SK-N-SH (cell line): ENCODE measurements at regions of chr2 and their contacts with region 1.

Region 1: DNA sequence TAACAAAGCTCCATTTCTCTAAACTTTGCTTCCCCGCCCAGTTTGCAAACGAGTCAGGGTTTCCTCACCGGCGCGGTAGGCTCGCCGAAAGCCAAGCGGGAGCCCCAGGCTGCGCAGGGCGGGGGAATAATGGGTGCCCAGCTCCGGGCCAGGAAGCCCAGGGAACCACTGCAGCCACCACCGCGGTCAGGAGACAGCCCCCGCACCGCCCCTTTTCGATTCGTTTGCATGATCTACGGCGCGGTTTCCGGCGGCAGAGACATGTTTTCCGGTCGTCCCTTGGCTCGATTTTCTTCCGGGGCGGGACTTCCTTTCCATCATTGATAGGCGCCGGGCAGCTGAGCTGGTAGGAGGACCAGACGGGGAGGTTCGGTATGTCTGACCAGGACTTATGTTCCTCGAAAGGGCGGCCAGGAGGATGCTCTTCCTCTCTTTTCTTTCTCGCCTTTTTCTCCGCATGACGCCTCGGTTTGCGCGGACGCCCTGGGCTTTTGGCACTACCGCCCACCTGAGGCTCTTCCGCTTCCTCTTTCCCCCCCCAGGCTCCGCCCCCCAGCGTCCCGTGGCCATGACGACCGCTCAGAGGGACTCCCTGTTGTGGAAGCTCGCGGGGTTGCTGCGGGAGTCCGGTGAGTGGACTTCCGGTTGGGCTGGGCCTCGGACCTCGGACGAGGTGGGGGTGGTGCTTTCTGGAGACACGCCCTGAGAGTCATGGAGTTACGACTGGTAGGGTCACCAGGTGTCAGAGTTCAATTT is at the start of gene STK11IP:
- DNase-seq: peak; percentile 98
- H3K4me3 ChIP-seq: peak within 1 kb of the TSS; percentile 71 to 73
- H3K27ac ChIP-seq: peak within 1 kb of the TSS; percentile 80 to 95
- H3K4me1 ChIP-seq: peaks cover 0 to 4% of the 10 kb centered on the region in 2 experiments; a peak in 2 of 4 replicates
- H3K27me3 ChIP-seq: no peaks in the 10 kb centered on the region
- CTCF ChIP-seq: no peak
- EP300 ChIP-seq: no peak
- RAD21 ChIP-seq: no peak
- polyA plus RNA-seq, gene STK11IP: 22.1 and 22.9 TPM in 2 replicates

Region 2: DNA sequence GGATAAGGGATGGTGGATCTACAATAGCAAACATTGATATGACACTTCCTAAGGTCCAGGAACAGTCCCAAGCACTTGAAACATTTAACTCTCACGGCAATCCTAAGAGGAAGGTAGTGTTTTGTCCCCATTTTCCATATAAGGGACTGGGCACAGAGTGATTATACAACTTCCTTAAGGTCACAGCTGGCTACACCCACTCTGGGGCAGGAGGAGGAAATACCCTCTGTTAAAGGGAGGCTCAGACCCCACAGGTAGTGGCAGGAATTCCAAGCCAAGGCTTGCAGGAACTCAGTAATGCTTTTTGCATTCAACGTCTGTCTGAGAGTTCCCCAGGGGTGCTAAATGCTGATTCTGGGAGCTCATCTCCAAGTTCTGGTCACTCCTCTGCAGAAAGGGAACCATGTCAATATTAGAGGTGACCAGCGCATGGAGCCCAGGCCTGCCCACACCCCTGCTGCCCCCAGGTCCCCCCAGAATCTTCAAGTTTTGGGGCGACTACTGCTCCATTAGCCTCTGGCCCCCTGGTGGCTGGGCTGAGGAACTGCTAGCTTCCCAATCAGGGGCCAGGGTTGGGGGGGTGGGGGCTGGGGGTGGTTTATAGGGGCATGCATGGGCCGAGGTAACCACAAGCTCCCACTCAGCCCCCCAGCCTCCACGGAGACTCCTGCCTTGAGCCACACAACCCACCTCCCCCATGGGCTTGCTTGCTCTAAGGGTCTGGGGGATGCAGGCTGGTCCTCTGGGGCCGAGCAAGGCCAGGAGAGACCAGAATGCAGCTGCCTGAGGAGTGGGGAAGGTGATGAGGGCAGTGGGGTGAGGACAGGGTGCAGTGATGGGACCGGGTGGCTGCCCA is 37.5 kb before region 1 on chr2:
- CTCF ChIA-PET with region 1: interaction called, 25 read pairs
- POLR2A ChIA-PET with region 1: interaction called, 9 read pairs
- DNase-seq: peak; percentile 90
- H3K4me3 ChIP-seq: no peak overlapping the region
- H3K27ac ChIP-seq: no peak overlapping the region
- H3K4me1 ChIP-seq: peaks cover 0 to 10% of the 10 kb centered on the region in 2 experiments; a peak in 1 of 4 replicates
- H3K27me3 ChIP-seq: no peaks in the 10 kb centered on the region
- CTCF ChIP-seq: peak; percentile 70
- EP300 ChIP-seq: no peak
- RAD21 ChIP-seq: no peak

Region 3: DNA sequence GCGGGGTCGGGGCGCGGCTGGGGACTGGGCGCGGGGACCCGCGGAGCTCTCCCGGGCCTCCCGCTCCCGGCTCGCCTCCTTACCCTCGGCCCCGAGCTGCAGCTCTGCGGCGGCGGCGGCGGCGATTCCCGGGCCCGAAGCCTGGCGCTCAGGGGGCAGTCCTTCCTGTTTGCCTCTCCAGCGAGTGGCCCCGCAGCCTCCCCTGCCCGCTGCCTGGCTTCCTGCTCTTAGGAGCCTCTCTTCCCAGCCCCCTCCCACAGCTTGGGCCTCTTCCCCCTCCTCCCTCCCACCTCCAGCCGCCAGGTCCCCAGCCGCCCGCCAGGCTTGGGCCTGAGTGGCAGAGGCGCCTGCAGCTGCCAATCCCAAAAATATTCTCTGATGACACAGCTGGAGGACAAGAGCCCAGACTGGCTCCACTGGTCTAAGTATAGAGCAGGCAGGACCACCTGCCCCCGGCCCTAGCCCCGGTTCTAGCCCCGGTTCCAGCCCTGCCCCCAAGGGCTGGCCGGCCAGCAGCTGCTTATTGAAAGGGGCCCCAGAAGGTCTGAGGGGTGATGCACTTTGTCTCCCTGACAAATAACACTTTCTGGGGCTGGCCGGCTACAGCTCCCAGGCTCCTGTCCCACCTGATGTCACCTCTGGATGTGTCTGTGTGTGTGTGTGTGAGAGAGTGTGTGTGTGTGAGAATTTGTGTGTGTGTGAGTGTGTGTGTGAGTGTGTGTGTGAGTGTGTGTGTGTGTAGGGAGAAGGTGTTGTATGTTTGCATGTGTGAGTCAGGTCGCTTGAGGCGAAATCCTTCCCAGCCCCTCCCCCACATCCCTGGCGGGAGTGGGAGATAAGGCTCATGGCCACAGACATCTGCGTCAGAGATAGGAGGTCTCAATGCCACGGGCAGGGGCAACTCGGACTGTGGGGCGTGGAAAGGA is 26.2 kb before region 1 on chr2 and contains the start of gene OBSL1:
- CTCF ChIA-PET with region 1: interaction called, 13 read pairs
- POLR2A ChIA-PET with region 1: interaction called, 56 read pairs
- DNase-seq: peak; percentile 97
- H3K4me3 ChIP-seq: peak within 1 kb of the TSS; percentile 65 to 82
- H3K27ac ChIP-seq: peak within 1 kb of the TSS; percentile 36 to 76
- H3K4me1 ChIP-seq: peaks cover 3 to 21% of the 10 kb centered on the region in 2 experiments; a peak in 1 of 4 replicates
- H3K27me3 ChIP-seq: no peaks in the 10 kb centered on the region
- CTCF ChIP-seq: no peak
- EP300 ChIP-seq: peak in 1 of 2 experiments; percentile 55; a peak in 1 of 4 replicates
- RAD21 ChIP-seq: no peak; the same call in 1 of the 2 replicates
- polyA plus RNA-seq, gene OBSL1: 70.9 and 93.0 TPM in 2 replicates

Region 4: DNA sequence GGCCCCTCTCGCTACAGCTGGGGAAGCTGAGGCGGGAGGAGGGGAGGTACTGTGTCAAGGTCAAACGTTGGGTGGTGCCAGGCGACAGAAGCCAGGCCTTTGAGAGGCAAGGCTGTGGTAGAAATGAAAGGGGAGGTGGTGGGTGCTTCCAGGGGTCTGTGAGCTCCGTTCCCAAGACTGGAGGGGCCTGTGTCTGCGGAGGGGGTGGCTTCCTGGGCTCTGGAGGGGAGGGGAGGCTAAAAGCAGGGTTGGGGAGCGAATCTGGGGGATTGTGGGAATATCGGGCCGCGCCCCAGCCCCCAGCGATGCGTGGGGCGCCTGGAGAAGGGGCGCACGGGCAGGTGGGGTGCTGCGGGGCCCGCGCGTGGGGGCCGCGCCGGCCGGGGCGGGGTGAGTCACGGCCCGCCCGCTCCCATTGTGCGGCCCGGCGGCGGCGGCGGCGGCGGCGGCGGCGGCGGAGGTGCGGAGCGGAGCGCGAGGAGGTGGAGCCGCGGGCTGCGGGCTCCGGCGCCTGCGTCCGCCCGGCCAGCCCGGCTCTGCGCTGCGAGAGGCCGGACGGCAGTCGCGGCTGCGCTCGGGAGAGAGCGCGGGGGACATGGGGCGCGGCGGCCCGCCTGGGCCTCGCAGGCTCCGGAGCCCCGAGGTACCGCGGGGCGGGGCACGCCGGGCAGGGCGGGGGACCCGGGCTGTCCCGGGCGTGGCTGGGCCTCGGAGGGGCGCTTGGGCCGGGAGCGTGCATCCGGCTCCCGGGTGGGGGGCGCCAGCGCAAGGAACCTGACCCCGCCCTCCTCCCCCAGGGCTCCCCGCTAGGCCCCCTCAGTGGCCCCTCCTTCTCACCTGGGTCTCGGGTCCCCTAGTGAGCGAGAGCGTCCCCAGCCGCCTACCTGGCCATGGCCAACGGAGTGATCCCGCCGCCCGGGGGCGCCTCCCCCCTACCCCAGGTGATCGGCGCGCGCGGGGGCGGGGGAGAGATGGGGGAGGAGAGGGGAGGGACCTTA is 29.7 kb after region 1 on chr2 and contains the start of gene SLC4A3:
- CTCF ChIA-PET with region 1: interaction called, 3 read pairs
- POLR2A ChIA-PET with region 1: interaction called, 18 read pairs
- DNase-seq: peak; percentile 94
- H3K4me3 ChIP-seq: peak within 1 kb of the TSS; percentile 64 to 68
- H3K27ac ChIP-seq: peak within 1 kb of the TSS in 1 of 2 experiments; percentile 68; a peak in 1 of 4 replicates
- H3K4me1 ChIP-seq: peaks cover 0 to 13% of the 10 kb centered on the region in 2 experiments; a peak in 1 of 4 replicates
- H3K27me3 ChIP-seq: no peaks in the 10 kb centered on the region
- CTCF ChIP-seq: 0 out of 2 replicates have a peak, but pooled peaks have one; percentile 14
- EP300 ChIP-seq: no peak
- RAD21 ChIP-seq: no peak
- polyA plus RNA-seq, gene SLC4A3: 12.2 and 12.3 TPM in 2 replicates

Region 5: GRCh38 chr2:220188031-220188430 is 590.3 kb after region 1 on chr2:
- CTCF ChIA-PET with region 1: no interaction called
- POLR2A ChIA-PET with region 1: no interaction called
- DNase-seq: no peak
- H3K4me3 ChIP-seq: no peak overlapping the region
- H3K27ac ChIP-seq: no peak overlapping the region
- H3K4me1 ChIP-seq: no peaks in the 10 kb centered on the region
- H3K27me3 ChIP-seq: no peaks in the 10 kb centered on the region
- CTCF ChIP-seq: no peak
- EP300 ChIP-seq: no peak
- RAD21 ChIP-seq: no peak